ENCODE measurements at regions of chr17 and their contacts with region 1.

Region 1: GRCh38 chr17:49230636-49231562 is at the start of gene PHOSPHO1:
- DNase-seq: peak; percentile 88 to 95
- ATAC-seq: peak; percentile 91 to 95 (median 95)
- H3K4me3 ChIP-seq: peak within 1 kb of the TSS; percentile 63
- H3K4me3 Mint-ChIP-seq: peak within 1 kb of the TSS; percentile 91
- H3K27ac ChIP-seq: no peak within 1 kb of the TSS
- H3K27ac Mint-ChIP-seq: peak within 1 kb of the TSS; percentile 35 to 59
- H3K4me1 ChIP-seq: peaks cover 37% of the 10 kb centered on the region
- H3K4me1 Mint-ChIP-seq: peaks cover 18 to 49% of the 10 kb centered on the region in 2 donors
- H3K27me3 ChIP-seq: no peaks in the 10 kb centered on the region
- H3K27me3 Mint-ChIP-seq: no peaks in the 10 kb centered on the region
- CTCF ChIP-seq: no peak
- total RNA-seq, gene PHOSPHO1: 1.7 TPM in 1 of 3 donors, not detected in the others

Region 2: DNA sequence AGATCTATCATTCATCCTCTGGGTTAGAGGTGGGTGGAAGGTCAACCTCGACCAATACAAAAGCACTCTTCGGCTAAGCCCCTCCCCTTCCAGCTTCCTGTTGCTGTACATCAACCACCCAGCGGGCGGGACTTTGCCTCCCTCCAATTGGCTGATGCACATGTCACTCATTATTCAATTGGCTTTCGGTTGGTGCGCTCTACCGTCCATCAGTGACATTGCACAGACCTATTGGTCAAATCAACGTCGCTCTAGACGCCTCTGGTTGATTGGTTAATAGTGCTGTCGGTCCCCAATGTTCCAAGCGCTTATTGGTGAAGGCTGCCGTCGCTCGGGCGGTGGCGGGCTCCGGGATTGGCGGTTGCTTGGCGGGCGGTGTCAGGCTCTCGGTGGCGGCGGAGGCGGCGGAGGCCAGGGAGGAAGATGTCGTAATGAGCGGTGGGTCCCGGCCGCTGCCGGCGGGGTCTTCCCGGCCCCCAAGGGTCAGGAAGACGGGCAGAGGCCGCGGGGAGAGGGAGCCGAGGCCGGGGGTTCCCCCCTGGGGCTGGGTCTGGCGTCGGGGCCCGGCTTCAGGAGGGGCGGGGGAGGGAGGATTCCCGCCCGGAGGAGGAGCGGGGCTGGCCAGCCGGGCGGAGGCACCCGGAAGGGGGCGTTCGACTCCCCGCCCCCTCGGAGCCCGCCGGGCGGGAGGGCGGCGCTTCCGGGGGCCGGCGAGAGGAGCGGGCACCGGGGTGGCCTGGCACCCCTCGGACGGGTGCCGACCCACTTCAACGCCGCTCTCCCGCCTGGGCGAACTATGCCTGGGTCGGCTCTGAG is 1334.8 kb before region 1 on chr17 and contains the start of gene SP2:
- intact Hi-C with region 1: no loop called
- DNase-seq: peak; percentile 100
- ATAC-seq: peak; percentile 81 to 95 (median 84)
- H3K4me3 ChIP-seq: peak within 1 kb of the TSS; percentile 83
- H3K4me3 Mint-ChIP-seq: peak within 1 kb of the TSS; percentile 98
- H3K27ac ChIP-seq: peak within 1 kb of the TSS; percentile 90
- H3K27ac Mint-ChIP-seq: peak within 1 kb of the TSS; percentile 95 to 97
- H3K4me1 ChIP-seq: peaks cover 18% of the 10 kb centered on the region
- H3K4me1 Mint-ChIP-seq: peaks cover 43 to 45% of the 10 kb centered on the region in 2 donors
- H3K27me3 ChIP-seq: no peaks in the 10 kb centered on the region
- H3K27me3 Mint-ChIP-seq: no peaks in the 10 kb centered on the region
- CTCF ChIP-seq: no peak
- total RNA-seq, gene SP2: 29.4 to 44.1 (median 33.1) TPM

Region 3: DNA sequence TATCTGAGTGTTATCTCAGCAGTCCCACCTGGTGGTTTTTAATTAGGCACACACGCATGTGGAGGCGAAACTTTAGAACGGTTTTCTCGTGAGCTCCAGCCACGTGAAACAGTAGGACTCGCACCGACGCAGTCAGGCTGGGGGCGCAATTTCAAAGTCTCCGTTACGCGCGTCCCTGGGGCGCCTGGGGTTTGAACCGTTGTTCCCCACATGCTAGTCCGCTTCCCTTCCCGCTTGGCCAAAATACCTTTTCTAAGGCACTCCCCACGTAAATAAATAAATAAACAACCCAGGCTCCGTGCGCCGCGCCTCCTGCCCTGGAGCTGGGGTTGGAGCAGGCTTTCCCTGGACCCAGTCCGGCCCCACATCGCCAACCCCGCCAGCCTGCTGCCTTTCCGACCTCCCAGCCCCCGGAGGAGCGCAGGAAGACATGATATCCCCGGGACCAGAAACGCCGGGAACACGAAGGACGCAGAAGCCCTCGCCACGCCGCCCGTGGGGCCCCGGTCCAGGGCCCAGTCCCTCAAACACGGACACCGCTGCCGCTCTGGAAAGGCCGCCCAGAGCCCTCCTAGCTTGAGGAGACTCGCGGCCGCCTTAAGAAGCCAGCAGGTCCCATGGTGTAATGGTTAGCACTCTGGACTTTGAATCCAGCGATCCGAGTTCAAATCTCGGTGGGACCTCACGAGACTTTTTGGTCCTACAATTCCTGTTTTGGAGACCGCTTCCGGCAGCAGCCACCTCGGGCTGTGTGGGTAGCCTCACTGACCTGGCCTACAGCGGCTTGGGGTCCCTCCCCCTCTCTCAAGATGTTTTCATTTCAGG is 38.8 kb before region 1 on chr17:
- intact Hi-C with region 1: loop called (anchors 1 kb)
- DNase-seq: peak; percentile 92
- ATAC-seq: peak; percentile 58 to 78 (median 64)
- H3K4me3 ChIP-seq: peak overlapping the region; percentile 87
- H3K4me3 Mint-ChIP-seq: peak overlapping the region; percentile 98
- H3K27ac ChIP-seq: peak overlapping the region; percentile 98
- H3K27ac Mint-ChIP-seq: peak overlapping the region; percentile 100
- H3K4me1 ChIP-seq: peaks cover 25% of the 10 kb centered on the region
- H3K4me1 Mint-ChIP-seq: peaks cover 32 to 40% of the 10 kb centered on the region in 2 donors
- H3K27me3 ChIP-seq: no peaks in the 10 kb centered on the region
- H3K27me3 Mint-ChIP-seq: peaks cover 0 to 2% of the 10 kb centered on the region in 2 donors
- CTCF ChIP-seq: peak; percentile 21

Region 4: GRCh38 chr17:49217651-49218413 is 13.1 kb before region 1 on chr17:
- intact Hi-C with region 1: loop called (anchors 1 kb)
- DNase-seq: peak; percentile 73 to 93
- ATAC-seq: peak; percentile 58 to 81 (median 75)
- H3K4me3 ChIP-seq: peak overlapping the region; percentile 6
- H3K4me3 Mint-ChIP-seq: peak overlapping the region; percentile 89
- H3K27ac ChIP-seq: peak overlapping the region; percentile 97
- H3K27ac Mint-ChIP-seq: peak overlapping the region; percentile 81 to 98
- H3K4me1 ChIP-seq: peaks cover 98% of the 10 kb centered on the region
- H3K4me1 Mint-ChIP-seq: peaks cover 63 to 83% of the 10 kb centered on the region in 2 donors
- H3K27me3 ChIP-seq: no peaks in the 10 kb centered on the region
- H3K27me3 Mint-ChIP-seq: no peaks in the 10 kb centered on the region
- CTCF ChIP-seq: no peak

Region 5: GRCh38 chr17:49361902-49362722 is 131.2 kb after region 1 on chr17 and contains the start of gene ZNF652:
- intact Hi-C with region 1: loop called (anchors 10 kb)
- DNase-seq: peak; percentile 82 to 97
- ATAC-seq: peak; percentile 62 to 84 (median 68)
- H3K4me3 ChIP-seq: peak within 1 kb of the TSS; percentile 91
- H3K4me3 Mint-ChIP-seq: peak within 1 kb of the TSS; percentile 91
- H3K27ac ChIP-seq: peak within 1 kb of the TSS; percentile 78
- H3K27ac Mint-ChIP-seq: peak within 1 kb of the TSS; percentile 90 to 97
- H3K4me1 ChIP-seq: peaks cover 44% of the 10 kb centered on the region
- H3K4me1 Mint-ChIP-seq: peaks cover 57 to 58% of the 10 kb centered on the region in 2 donors
- H3K27me3 ChIP-seq: no peaks in the 10 kb centered on the region
- H3K27me3 Mint-ChIP-seq: no peaks in the 10 kb centered on the region
- CTCF ChIP-seq: no peak
- total RNA-seq, gene ZNF652: 53.8 to 79.1 (median 73.3) TPM

Measured in natural killer cell (primary cell).